Heart left ventricle (tissue), 16 donors: ENCODE measurements at regions of chr17 and their contacts with region 1.

Region 1: GRCh38 chr17:61251939-61252896 is 147.4 kb upstream of the TBX2 start:
- DNase-seq: peak; percentile 91 to 95 (median 93)
- ATAC-seq: peak; percentile 93 to 97 (median 95)
- H3K4me3 ChIP-seq: no peak overlapping the region
- H3K27ac ChIP-seq: peak overlapping the region; percentile 52 to 85 (median 68)
- H3K4me1 ChIP-seq: peaks cover 0 to 59% (median 32%) of the 10 kb centered on the region in 12 donors
- H3K27me3 ChIP-seq: no peaks in the 10 kb centered on the region
- CTCF ChIP-seq: no peak
- POLR2A ChIP-seq: no peak

Region 2: DNA sequence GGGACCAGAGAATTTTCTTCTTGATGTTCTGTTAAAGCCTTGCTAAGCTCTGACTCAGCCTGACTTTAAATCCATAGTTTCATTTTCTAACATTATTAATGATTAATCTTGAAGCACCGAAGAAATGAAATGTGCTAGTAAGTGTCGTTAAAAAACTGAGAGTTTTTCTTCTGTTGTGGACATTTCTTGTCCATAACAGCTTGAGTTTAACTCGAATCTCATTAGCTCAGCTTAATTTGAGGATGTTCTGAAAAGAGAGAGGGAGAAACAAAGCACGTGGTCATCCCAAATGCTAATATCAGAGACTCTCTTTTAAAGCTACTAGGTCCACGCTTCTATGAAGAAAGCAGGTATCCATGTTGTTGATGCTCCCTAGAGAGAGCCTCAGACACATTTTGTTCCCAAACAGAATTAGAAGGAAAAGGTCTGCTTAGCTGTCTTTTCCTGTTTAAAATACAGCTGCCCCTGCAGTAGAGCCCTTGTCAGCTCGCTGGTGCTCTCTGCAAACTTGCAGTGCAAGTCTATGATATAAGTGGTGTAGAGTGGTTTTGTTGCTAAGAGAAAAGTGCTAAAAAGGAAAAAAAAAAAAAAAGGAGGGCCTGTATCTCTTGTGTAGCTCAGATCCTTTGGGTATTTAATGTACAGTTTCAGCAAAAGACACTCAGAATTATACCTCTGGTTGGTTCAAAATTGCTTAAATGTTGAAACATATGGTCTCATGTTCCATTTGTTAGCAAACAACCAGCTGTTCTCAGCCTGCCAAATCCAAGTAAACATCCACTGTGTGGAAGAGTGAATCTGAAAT is 43.7 kb before region 1 on chr17:
- intact Hi-C with region 1: loop called in 3 of 10 experiments (anchors 2 to 5 kb)
- DNase-seq: peak in 1 of 5 donors; percentile 31
- ATAC-seq: peak in 3 of 4 donors; percentile 52 to 70 (median 66)
- H3K4me3 ChIP-seq: peak overlapping the region in 6 of 12 donors; percentile 0 to 16 (median 5)
- H3K27ac ChIP-seq: peak overlapping the region; percentile 45 to 76 (median 65)
- H3K4me1 ChIP-seq: peaks cover 0 to 43% (median 11%) of the 10 kb centered on the region in 12 donors
- H3K27me3 ChIP-seq: no peaks in the 10 kb centered on the region
- CTCF ChIP-seq: no peak
- POLR2A ChIP-seq: no peak

Region 3: DNA sequence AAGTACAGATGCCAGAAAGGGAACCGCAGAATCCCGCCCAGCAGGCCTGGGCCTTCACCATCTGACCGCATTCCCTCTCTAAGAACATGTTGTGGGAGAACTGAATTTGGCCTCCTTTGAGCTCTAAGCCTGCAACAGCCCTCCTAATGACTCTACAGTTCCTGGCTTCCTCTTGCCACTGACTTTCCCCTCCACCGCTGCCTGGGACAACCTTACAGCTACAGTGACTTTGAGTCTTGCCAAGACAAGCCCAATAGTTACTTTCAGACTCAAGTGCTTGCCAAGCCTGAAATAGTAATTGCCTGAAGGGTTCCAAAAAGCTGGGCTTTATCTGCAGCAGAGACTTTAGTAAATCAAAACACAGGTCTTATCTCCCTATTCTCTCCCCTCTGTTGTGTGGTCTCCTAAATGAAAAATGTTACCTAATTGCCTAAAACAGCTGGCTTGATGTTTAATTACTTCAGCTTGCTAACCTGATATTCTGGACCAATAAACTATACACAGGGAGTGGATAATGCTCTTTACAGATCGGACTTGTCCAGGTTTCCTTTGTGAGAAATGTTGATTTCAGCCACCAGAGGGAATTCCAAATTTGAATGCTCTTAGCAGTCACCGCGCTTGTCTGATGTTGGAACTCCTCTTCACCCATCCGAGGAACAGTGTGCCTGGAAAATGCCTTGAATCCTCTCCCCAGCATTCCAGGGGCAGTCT is 62.3 kb after region 1 on chr17:
- intact Hi-C with region 1: loop called in 1 of 10 experiments (anchors 5 kb)
- DNase-seq: peak in 4 of 5 donors; percentile 60 to 78 (median 64)
- ATAC-seq: peak; percentile 88 to 95 (median 92)
- H3K4me3 ChIP-seq: no peak overlapping the region
- H3K27ac ChIP-seq: peak overlapping the region; percentile 41 to 81 (median 64)
- H3K4me1 ChIP-seq: peaks cover 7 to 31% (median 24%) of the 10 kb centered on the region in 12 donors
- H3K27me3 ChIP-seq: no peaks in the 10 kb centered on the region
- CTCF ChIP-seq: peak in 7 of 12 donors; percentile 11 to 37 (median 29)
- POLR2A ChIP-seq: no peak

Region 4: GRCh38 chr17:61325382-61326073 is 73.3 kb after region 1 on chr17:
- intact Hi-C with region 1: loop called in 1 of 10 experiments (anchors 10 kb)
- DNase-seq: no peak
- ATAC-seq: peak in 3 of 4 donors; percentile 16 to 41 (median 35)
- H3K4me3 ChIP-seq: no peak overlapping the region
- H3K27ac ChIP-seq: peak overlapping the region in 6 of 12 donors; percentile 9 to 70 (median 37)
- H3K4me1 ChIP-seq: peaks cover 0 to 39% (median 21%) of the 10 kb centered on the region in 12 donors
- H3K27me3 ChIP-seq: no peaks in the 10 kb centered on the region
- CTCF ChIP-seq: no peak
- POLR2A ChIP-seq: no peak

Region 5: DNA sequence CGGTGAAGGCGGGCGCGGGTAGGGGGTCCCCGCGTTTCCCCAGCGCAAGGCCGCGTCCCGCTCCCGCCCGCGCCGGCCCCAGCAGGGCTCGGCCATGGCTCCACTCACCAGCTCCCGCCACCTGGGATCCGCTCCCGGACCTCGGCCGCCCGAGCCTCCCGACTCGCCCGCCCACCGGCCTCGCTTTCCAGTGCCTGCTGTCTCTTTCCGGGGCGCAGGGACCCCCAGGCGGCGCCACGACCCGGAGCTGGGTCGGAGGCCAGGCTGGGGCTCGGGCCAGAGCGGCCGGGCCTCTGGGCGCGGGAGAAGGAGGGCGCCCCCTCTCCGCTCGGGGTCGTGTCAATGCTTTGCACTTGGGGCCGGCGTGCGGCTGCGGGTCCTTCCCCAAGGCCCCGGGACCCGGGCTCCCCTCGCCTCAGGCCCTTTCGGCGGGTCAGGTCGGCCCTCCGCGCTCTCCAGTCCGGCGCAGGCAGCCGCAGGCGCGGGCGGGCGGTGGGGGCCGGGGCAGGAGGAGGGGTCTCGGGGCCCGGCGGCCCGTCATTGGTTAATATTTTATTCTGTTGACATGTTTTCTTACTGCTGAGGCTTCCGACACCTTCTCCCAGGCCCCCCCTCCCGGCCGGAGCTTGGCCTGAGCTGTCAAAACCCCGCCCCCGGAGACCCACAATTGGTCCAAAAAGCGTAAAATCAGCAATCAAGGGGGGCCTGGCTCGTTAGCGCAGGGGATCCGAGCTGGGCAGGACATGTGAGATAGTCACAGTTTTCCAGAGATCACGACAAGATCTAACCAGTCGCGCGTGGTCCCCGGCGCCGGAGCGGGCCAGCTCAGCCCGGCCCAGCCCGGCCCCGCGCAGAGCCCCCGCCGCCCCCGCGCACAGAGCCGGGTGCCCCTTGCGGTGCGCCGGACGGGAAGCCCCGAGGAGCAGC is 147.2 kb after region 1 on chr17 and contains the start of gene TBX2:
- intact Hi-C with region 1: loop called in 3 of 10 experiments (anchors 5 to 10 kb)
- DNase-seq: peak; percentile 84 to 90 (median 87)
- ATAC-seq: peak; percentile 47 to 75 (median 60)
- H3K4me3 ChIP-seq: peak within 1 kb of the TSS; percentile 51 to 84 (median 65)
- H3K27ac ChIP-seq: peak within 1 kb of the TSS; percentile 47 to 88 (median 78)
- H3K4me1 ChIP-seq: peaks cover 0 to 71% (median 34%) of the 10 kb centered on the region in 12 donors
- H3K27me3 ChIP-seq: peaks cover 37 to 90% (median 80%) of the 10 kb centered on the region in 9 donors
- CTCF ChIP-seq: peak in 1 of 12 donors; percentile 17
- POLR2A ChIP-seq: peak in 1 of 2 donors; percentile 50
- total RNA-seq, gene TBX2: 7.0 to 23.0 (median 13.6) TPM